Activated naive CD4-positive, alpha-beta T cell treated with anti-CD3 and anti-CD28 coated beads for 36 hours (primary cell): ENCODE measurements at regions of chr15 and their contacts with region 1.

Region 1: DNA sequence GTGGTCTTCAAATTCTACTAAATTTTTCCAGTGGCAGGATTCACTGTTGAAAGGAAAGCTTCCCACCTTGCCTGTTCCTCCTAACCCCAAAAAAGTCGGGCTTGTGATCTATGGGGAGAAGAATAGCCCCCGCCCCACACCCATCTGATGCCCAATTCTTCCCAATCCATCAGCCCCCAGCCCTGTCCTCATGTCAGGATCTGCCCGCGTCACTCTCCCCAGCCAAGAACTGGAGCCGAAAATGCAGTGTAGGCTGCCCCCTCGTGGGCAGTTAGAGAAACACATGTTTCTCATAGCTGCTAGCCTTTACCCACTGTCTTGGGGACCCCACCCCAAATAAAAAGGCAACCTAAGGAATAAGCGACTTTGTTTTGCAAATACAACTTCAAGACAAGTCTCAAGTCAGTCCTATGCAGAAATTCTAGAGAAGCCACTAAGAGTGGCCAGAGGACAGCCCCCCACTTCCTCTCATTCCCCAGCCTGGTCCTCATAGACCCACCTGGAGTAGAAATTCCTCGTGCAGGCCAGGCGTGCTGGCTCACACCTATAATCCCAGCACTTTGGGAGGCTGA is 13.0 kb upstream of the CSK start:
- DNase-seq: peak; percentile 80
- H3K4me3 Mint-ChIP-seq: no peak overlapping the region
- H3K27ac Mint-ChIP-seq: peak overlapping the region; percentile 25
- H3K4me1 Mint-ChIP-seq: peaks cover 24% of the 10 kb centered on the region
- H3K27me3 Mint-ChIP-seq: no peaks in the 10 kb centered on the region

Region 2: DNA sequence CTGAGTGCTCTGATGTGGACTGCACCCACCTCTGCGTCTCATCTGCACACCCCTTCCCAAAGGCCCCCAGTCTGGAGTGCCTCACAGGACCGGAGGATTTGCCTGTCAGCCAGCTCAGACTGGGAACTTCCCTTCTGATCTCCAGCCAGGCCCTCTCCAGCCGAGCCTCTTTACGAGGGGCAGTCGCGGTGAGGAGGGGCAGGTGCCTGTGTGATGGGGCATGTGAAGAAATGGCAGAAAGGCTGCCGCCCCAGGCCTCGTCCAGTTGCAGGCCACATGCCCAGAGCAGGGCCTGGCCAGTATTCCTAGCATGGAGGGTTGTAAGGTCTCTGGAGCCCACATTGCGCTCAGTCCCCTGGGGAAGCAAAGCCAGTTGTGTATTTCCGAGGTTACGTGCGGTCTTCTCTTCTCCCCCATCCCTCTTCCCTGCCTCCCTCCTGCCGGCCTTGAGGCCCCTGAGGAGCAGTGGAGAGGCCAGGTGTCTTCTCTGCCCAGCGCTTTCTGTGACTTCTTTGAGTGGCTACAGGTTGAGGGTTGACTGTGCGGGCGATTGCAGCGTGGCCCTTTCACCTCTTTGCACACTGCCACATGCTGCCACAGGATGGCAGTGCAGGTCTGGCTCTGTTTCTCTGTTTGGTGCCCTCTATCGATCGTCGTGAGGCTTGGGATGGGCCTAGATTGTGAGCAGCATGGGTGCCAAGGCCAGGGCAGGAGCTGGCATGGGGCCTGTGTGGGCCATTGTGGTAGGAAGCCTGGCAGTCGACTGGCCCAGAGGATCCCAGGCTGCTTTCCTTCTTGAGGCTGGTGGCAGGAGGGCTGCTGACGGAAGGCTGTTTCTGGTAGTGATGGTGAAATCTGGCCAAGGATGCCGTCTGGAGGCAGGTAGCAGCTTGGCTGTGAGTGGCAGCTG is 148.0 kb before region 1 on chr15:
- CTCF ChIA-PET with region 1: interaction called, 40 read pairs
- intact Hi-C with region 1: no loop called
- DNase-seq: peak; percentile 88
- H3K4me3 Mint-ChIP-seq: no peak overlapping the region
- H3K27ac Mint-ChIP-seq: peak overlapping the region; percentile 79
- H3K4me1 Mint-ChIP-seq: peaks cover 53% of the 10 kb centered on the region
- H3K27me3 Mint-ChIP-seq: no peaks in the 10 kb centered on the region

Region 3: GRCh38 chr15:74725845-74726773 is 42.7 kb before region 1 on chr15:
- CTCF ChIA-PET with region 1: interaction called, 13 read pairs
- intact Hi-C with region 1: no loop called
- DNase-seq: peak; percentile 63
- H3K4me3 Mint-ChIP-seq: peak overlapping the region; percentile 67
- H3K27ac Mint-ChIP-seq: no peak overlapping the region
- H3K4me1 Mint-ChIP-seq: peaks cover 11% of the 10 kb centered on the region
- H3K27me3 Mint-ChIP-seq: peaks cover 21% of the 10 kb centered on the region

Region 4: DNA sequence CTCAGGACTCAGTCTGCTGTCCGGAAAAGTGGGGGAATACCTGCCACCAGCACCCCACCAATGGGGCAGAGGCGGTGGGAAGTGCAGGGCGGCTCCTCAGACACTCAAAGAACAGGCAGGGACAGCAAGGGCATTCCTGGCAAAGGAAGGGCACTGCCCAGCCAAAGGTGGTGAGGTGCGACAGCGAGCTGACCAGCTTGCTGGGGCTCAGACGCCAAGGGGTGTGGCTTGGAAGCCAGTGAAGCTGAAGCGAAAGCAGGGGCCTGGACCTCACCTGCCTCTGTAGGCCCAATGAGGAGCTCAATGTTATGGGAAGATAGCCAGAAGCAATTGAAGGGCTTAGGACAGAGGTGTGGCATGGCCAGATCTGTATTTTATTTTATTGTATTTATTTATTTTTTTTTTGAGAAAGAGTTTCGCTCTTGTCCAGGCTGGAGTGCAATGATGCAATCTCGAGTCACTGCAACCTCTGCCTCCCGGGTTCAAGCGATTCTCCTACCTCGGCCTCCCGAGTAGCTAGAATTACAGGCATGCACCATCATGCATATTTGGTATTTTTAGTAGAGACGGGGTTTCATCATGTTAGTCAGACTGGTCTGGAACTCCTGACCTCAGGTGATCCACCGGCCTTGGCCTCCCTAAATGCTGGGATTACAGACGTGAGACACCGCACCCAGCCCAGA is 39.4 kb after region 1 on chr15:
- CTCF ChIA-PET with region 1: interaction called, 1,193 read pairs
- intact Hi-C with region 1: no loop called
- DNase-seq: no peak
- H3K4me3 Mint-ChIP-seq: no peak overlapping the region
- H3K27ac Mint-ChIP-seq: peak overlapping the region; percentile 2
- H3K4me1 Mint-ChIP-seq: peaks cover 27% of the 10 kb centered on the region
- H3K27me3 Mint-ChIP-seq: no peaks in the 10 kb centered on the region

Region 5: GRCh38 chr15:74906446-74907162 is 137.7 kb after region 1 on chr15 and contains the start of gene FAM219B:
- CTCF ChIA-PET with region 1: interaction called, 79 read pairs
- intact Hi-C with region 1: loop called (anchors 1 kb)
- DNase-seq: peak; percentile 88
- H3K4me3 Mint-ChIP-seq: peak within 1 kb of the TSS; percentile 89
- H3K27ac Mint-ChIP-seq: peak within 1 kb of the TSS; percentile 92
- H3K4me1 Mint-ChIP-seq: peaks cover 28% of the 10 kb centered on the region
- H3K27me3 Mint-ChIP-seq: no peaks in the 10 kb centered on the region
- total RNA-seq, gene FAM219B: 60.3 to 63.0 TPM